Activated T-helper 1 cell treated with anti-CD3 and anti-CD28 coated beads, Interleukin-12 subunit alpha, Interleukin-12 subunit beta, Interleukin-2, Interleukin-4 antibody, amounts not matched to agents 30 ng/mL and 10 ng/mL and 1 ng/mL, durations not matched to agents 14 hours and 24 hours and 36 hours (primary cell): ENCODE measurements at regions of chr4 and their contacts with region 1.

Region 1: GRCh38 chr4:183444214-183445066 is at the start of gene CDKN2AIP:
- DNase-seq: peak; percentile 93
- H3K4me3 Mint-ChIP-seq: peak within 1 kb of the TSS; percentile 99
- H3K27ac Mint-ChIP-seq: peak within 1 kb of the TSS; percentile 99
- H3K4me1 Mint-ChIP-seq: peaks cover 42% of the 10 kb centered on the region
- H3K27me3 Mint-ChIP-seq: peaks cover 2% of the 10 kb centered on the region
- total RNA-seq, gene CDKN2AIP: 23.9 and 24.1 TPM in 2 replicates

Region 2: DNA sequence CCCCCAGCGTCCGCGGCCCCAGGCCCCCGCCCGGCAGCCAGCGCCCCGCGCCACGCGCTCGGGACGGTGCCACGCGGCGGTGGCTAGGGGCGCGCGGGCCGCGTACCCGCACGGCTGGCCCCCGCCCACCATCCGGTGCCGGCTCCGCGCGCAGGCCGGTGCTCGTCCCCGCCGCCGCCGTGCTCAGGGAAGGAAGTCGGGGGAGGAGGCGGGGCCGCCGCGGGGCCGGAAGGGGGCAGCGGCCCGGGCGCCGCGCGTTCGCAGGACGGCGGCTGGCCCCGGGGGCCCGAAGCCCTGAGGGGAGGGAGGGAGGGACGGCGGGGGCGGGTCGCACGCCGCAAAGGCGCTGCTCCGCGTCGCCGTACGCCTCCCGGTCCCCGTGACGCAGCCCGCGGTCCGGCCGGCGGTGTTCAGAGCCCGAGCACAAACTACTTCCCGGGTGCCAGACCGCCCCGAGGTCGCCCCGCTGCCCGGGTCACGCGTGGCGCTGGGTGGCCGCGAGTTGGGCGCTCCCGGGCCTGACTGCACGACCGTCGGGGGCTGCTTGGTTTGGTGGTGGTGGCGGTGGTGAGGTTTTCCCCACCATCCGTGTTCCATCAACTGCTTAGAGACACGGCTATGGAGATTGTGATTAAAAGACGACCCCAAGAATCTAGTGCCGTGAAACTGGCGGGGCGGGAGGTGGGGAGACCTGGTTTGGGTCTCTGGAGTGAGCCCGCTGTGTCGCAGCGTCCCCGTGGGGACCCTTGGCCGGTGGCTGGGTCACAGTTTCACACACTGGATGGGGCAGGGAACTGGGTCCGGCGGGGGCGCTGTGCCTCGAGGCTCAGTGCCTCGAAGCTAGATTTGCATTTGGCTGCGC is 527.0 kb before region 1 on chr4 and contains the start of gene DCTD:
- intact Hi-C with region 1: loop called (anchors 1 kb)
- DNase-seq: peak; percentile 78
- H3K4me3 Mint-ChIP-seq: peak within 1 kb of the TSS; percentile 92
- H3K27ac Mint-ChIP-seq: peak within 1 kb of the TSS; percentile 97
- H3K4me1 Mint-ChIP-seq: peaks cover 50% of the 10 kb centered on the region
- H3K27me3 Mint-ChIP-seq: peaks cover 10% of the 10 kb centered on the region
- total RNA-seq, gene DCTD: 122 and 131 TPM in 2 replicates

Region 3: DNA sequence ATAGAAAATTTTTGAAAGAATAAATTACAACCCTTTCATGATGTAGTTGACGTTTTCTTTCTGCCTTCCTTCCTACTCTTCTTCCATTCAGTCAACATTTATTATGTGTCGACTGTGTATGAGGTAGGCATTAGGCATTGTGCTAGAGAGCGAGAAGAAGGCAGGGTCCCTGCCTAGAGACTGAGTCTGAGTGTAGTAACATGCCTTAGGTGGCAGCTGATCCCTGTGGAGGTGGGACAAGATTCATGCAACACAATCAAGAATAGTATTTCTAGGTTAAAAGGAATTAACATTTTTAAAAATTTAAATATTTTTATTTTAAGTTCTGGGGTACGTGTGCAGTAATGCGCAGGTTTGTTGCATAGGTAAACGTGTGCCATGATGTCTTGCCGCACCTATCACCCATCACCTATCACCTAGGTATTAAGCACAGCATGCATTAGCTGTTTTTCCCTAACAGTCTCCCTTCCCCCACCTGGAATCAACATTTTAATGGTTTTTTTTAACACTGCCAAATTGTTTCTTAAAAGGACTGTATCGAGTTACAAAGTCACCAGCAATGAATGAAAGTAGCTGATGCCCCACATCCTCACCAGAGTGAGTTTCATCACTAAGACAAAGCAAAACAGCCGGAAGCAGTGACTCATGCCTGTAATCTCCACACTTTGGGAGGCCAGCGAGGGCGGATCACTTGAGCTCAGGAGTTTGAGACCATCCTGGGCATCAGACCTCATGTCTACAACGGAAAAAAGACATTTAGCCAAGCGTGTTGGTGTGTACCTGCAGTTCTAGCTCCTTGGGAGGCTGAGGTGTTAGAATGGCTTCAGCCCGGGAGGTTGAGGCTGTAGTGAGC is 261.3 kb before region 1 on chr4:
- intact Hi-C with region 1: loop called (anchors 1 kb)
- DNase-seq: no peak
- H3K4me3 Mint-ChIP-seq: no peak overlapping the region
- H3K27ac Mint-ChIP-seq: no peak overlapping the region
- H3K4me1 Mint-ChIP-seq: peaks cover 13% of the 10 kb centered on the region
- H3K27me3 Mint-ChIP-seq: peaks cover 33% of the 10 kb centered on the region

Region 4: DNA sequence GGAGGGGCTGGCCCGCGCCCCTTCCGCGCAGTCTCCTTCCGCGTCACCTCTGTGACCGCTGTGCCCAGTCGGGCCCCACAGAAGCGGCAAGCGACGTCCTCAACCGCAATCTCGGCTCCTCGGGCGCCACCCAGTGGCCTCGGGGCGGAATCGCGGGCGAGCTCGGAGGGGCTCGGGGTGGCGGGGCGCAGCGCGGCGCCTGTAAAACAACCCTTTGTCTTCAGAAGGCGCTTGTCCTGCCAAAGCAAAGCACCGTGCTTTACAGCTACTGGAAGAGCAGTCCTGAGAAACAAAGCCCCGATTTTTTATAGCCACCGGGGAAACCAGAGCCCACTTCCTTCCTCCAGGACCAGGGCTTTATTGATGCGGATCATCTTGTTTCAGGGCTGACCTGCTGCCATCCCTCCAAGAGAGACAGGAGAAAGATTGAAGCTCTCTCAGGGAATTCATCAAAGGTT is 37.3 kb before region 1 on chr4:
- intact Hi-C with region 1: loop called (anchors 1 kb)
- DNase-seq: peak; percentile 82
- H3K4me3 Mint-ChIP-seq: peak overlapping the region; percentile 81
- H3K27ac Mint-ChIP-seq: no peak overlapping the region
- H3K4me1 Mint-ChIP-seq: peaks cover 8% of the 10 kb centered on the region
- H3K27me3 Mint-ChIP-seq: peaks cover 10% of the 10 kb centered on the region

Region 5: DNA sequence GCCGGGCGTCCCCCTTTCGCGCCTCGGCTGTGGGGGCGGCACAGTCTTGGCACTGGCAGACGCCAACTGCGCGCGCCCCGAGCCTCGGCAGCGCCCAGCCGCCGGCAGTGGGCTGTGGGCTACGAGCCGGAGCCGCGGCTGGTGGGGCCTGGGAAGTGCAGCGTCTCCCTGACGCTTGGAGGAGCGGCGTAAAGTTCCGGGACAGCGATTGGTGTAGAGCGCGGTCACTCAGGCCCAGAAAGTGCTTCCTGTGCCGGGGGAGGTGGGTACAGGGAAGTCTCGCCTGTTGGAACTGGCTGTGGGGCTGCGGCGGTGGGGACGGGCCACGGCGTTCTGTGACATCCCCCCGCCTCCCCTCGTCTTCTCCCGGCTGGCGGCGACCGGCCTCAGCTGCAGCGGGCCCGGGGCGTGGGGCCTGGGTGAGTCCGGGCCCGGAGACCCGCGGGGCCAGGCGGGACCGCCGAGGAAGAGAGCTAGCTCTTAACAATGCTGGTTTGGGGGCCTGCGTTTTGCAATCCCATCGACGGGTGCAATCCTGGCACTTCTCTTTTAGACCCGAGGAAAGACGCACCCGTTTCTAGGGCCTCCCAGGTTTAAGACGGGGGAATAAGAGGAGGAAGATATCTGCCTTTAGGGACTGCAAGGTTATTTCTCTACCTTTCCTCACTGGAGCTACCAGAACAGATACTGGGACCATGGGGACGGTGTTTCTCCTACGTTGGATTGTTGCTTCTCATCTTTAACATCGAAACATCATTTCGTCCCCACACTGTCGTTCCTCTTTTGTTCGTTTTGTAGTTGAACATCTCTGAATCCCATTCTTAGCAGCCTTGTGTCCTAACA is 214.8 kb after region 1 on chr4 and contains the starts of genes RWDD4 and TRAPPC11:
- intact Hi-C with region 1: loop called (anchors 1 kb)
- DNase-seq: peak; percentile 95
- H3K4me3 Mint-ChIP-seq: peak within 1 kb of the TSS; percentile 100
- H3K27ac Mint-ChIP-seq: peak within 1 kb of the TSS; percentile 96
- H3K4me1 Mint-ChIP-seq: peaks cover 32% of the 10 kb centered on the region
- H3K27me3 Mint-ChIP-seq: no peaks in the 10 kb centered on the region
- total RNA-seq, gene RWDD4: 23.9 and 24.2 TPM in 2 replicates
- total RNA-seq, gene TRAPPC11: 23.0 and 33.7 TPM in 2 replicates

Region 6: GRCh38 chr4:185425647-185426352 is 1981.4 kb after region 1 on chr4 and contains the start of gene UFSP2:
- intact Hi-C with region 1: loop called (anchors 2 kb)
- DNase-seq: peak; percentile 86
- H3K4me3 Mint-ChIP-seq: peak within 1 kb of the TSS; percentile 88
- H3K27ac Mint-ChIP-seq: peak within 1 kb of the TSS; percentile 92
- H3K4me1 Mint-ChIP-seq: peaks cover 35% of the 10 kb centered on the region
- H3K27me3 Mint-ChIP-seq: peaks cover 7% of the 10 kb centered on the region
- total RNA-seq, gene UFSP2: 19.8 and 19.9 TPM in 2 replicates